ENCODE measurements at regions of chr2 and their contacts with region 1.

Region 1: DNA sequence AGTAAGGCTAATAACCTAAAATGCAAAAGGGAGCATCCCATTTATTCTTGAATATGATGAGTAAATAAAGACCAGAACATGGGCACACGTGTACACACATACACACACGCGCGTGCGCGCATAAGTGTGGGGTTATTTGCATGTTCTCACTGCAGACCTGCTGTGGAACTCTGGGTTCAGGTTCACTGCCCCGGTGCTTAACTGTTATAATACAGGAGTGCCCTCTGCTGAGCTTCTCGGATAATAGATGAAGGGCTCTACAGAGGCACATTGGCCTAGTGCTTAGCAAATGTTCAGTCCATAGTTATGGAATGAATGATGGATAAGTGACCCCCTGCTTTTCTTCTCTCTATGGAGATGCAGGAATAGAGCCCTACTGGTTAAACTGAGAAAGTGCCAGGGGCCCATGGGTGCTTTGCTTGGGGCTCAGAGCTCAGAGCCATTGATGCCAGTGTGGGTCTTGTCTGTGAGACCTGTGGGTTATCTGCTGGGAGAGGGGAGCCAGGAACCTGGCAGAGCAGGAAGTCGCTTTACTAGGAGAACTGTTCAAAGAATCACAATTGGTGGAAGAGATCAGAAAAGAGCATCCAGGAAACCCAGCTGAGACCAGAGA is 3.6 kb upstream of the ARL4C start:
- DNase-seq: peak; percentile 52
- H3K4me3 ChIP-seq: no peak overlapping the region
- H3K27ac ChIP-seq: no peak overlapping the region
- H3K4me1 ChIP-seq: no peaks in the 10 kb centered on the region
- H3K27me3 ChIP-seq: no peaks in the 10 kb centered on the region
- CTCF ChIP-seq: peak in 3 of 4 experiments; percentile 54 to 74 (median 68)
- POLR2A ChIP-seq: no peak

Region 2: DNA sequence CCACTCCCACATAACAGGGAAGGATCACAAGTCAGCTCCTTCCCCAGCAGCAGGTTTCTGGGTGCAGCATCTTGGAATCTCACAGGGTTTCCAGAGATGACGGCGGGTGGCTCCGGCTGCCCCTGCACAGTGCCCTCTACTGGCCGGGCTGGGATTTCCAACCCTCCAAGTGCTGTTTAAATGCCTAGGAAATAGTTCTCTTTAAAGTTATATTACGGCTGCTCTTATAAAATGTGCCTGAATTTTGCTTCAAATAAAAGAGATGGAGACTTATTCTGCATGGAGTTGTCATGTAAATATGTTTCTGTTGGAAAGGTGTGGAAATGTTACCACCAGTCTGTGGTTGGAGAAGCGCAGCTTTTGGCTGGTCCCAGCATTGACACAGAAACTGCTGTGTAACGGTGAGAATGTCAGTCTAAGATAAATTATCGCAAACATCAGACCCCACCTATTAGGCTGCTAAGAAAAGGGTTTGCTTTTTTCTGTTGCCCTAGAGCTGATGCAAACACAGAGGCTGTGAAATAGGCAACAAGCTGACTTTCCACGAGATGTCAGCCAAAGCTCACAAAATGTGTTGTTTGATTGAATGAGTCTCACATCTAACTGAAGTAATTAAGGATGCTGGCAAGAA is 642.9 kb before region 1 on chr2:
- intact Hi-C with region 1: loop called (anchors 5 kb)
- DNase-seq: no peak
- H3K4me3 ChIP-seq: no peak overlapping the region
- H3K27ac ChIP-seq: no peak overlapping the region
- H3K4me1 ChIP-seq: no peaks in the 10 kb centered on the region
- H3K27me3 ChIP-seq: no peaks in the 10 kb centered on the region
- CTCF ChIP-seq: peak in 3 of 4 experiments; percentile 24 to 55 (median 27)
- POLR2A ChIP-seq: no peak

Region 3: GRCh38 chr2:233976690-233977294 is 523.7 kb before region 1 on chr2:
- intact Hi-C with region 1: loop called (anchors 5 kb)
- DNase-seq: peak; percentile 30
- H3K4me3 ChIP-seq: no peak overlapping the region
- H3K27ac ChIP-seq: no peak overlapping the region
- H3K4me1 ChIP-seq: no peaks in the 10 kb centered on the region
- H3K27me3 ChIP-seq: no peaks in the 10 kb centered on the region
- CTCF ChIP-seq: peak in 3 of 4 experiments; percentile 31 to 55 (median 43)
- POLR2A ChIP-seq: no peak

Region 4: GRCh38 chr2:234135720-234136221 is 364.7 kb before region 1 on chr2:
- intact Hi-C with region 1: loop called (anchors 2 kb)
- DNase-seq: peak; percentile 43
- H3K4me3 ChIP-seq: no peak overlapping the region
- H3K27ac ChIP-seq: no peak overlapping the region
- H3K4me1 ChIP-seq: no peaks in the 10 kb centered on the region
- H3K27me3 ChIP-seq: no peaks in the 10 kb centered on the region
- CTCF ChIP-seq: peak; percentile 30 to 78 (median 65)
- POLR2A ChIP-seq: no peak

Region 5: GRCh38 chr2:234288974-234289455 is 211.5 kb before region 1 on chr2:
- intact Hi-C with region 1: loop called (anchors 2 kb)
- DNase-seq: peak; percentile 74
- H3K4me3 ChIP-seq: no peak overlapping the region
- H3K27ac ChIP-seq: no peak overlapping the region
- H3K4me1 ChIP-seq: no peaks in the 10 kb centered on the region
- H3K27me3 ChIP-seq: no peaks in the 10 kb centered on the region
- CTCF ChIP-seq: peak; percentile 84 to 89 (median 86)
- POLR2A ChIP-seq: no peak

Region 6: GRCh38 chr2:234368861-234369261 is 131.6 kb before region 1 on chr2:
- intact Hi-C with region 1: loop called (anchors 2 kb)
- DNase-seq: peak; percentile 93
- H3K4me3 ChIP-seq: no peak overlapping the region
- H3K27ac ChIP-seq: peak overlapping the region; percentile 68 to 79
- H3K4me1 ChIP-seq: peaks cover 22% of the 10 kb centered on the region
- H3K27me3 ChIP-seq: no peaks in the 10 kb centered on the region
- CTCF ChIP-seq: peak in 1 of 4 experiments; percentile 38
- POLR2A ChIP-seq: no peak

Measured in prostate gland (tissue), 2 donors.